Activated naive CD8-positive, alpha-beta T cell treated with anti-CD3 and anti-CD28 coated beads, Interleukin-2, amount 10 ng/mL, durations not matched to agents 7 days and 5 days (primary cell): ENCODE measurements at regions of chr16 and their contacts with region 1.

Region 1: DNA sequence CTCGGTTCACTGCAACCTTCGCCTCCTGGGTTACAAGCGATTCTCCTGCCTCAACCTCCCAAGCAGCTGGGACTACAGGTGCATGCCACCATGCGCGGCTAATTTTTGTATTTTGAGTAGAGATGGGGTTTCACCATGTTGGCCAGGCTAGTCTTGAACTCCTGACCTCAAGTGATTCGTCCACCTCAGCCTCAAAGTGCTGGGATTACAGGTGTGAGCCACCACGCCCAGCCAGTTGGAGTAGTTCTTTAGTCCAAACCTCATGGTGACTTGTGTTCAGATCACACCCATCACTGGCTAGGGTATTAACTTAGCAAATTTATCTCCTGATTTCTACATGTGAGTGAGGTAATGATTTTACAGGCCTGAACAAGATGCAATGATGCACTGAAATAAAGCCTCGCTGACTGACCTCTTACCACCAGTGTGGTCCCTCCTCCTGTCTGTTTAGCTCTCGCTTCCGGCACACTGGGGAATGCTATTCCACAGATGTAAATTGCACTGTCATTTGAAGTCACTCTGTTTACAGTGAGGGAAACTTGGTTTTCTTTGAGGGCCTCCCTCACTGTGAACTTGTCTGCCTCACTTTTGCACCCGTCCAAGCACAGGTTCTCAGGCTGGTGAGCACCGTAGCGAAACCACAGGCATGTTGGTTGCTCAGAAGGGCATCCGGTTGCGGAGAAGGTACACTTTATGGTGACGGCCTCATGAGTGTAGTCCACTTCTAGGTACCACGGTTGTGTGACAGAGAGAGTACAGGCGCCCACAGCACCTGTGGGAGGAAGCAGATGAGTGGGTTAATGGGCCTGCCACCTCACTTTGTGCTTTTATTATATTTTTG is 5.5 kb downstream of the IGSF6 start:
- DNase-seq: peak; percentile 72
- ATAC-seq: peak; percentile 91
- H3K4me3 Mint-ChIP-seq: peak overlapping the region; percentile 71
- H3K27ac Mint-ChIP-seq: peak overlapping the region; percentile 95
- H3K4me1 Mint-ChIP-seq: peaks cover 39% of the 10 kb centered on the region
- H3K27me3 Mint-ChIP-seq: no peaks in the 10 kb centered on the region

Region 2: GRCh38 chr16:21599233-21600030 is 47.5 kb before region 1 on chr16 and contains the start of gene METTL9:
- POLR2A ChIA-PET with region 1: interaction called, 13 read pairs
- DNase-seq: peak; percentile 97
- ATAC-seq: peak; percentile 90
- H3K4me3 Mint-ChIP-seq: peak within 1 kb of the TSS; percentile 98
- H3K27ac Mint-ChIP-seq: peak within 1 kb of the TSS; percentile 94
- H3K4me1 Mint-ChIP-seq: peaks cover 42% of the 10 kb centered on the region
- H3K27me3 Mint-ChIP-seq: peaks cover 2% of the 10 kb centered on the region
- total RNA-seq, gene METTL9: 95.2 to 95.9 TPM

Region 3: DNA sequence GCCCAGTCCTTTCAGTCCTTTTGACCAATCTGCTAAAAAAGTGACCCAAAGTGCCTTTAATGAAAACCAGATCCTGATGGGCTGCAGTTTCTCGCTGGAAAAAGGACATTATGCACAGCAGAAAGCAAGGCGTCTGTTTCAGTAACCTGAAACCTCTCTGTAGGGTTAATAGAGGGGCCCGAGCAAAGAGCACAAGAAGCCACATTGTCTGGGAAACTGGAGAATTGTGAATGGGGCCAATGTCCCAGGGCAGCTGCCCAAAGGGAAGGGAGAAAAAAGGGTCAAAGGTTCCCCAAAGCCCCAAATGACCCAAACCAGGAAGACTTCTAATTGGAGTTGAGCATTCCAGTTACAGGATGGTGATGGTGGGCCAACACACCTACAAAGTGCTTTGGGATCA is 19.8 kb after region 1 on chr16:
- POLR2A ChIA-PET with region 1: no interaction called
- DNase-seq: no peak
- ATAC-seq: no peak
- H3K4me3 Mint-ChIP-seq: no peak overlapping the region
- H3K27ac Mint-ChIP-seq: no peak overlapping the region
- H3K4me1 Mint-ChIP-seq: peaks cover 3% of the 10 kb centered on the region
- H3K27me3 Mint-ChIP-seq: peaks cover 25% of the 10 kb centered on the region